ENCODE measurements at regions of chr10 and their contacts with region 1.

Region 1: GRCh38 chr10:70106958-70107791 is 25.4 kb downstream of the AIFM2 start:
- DNase-seq: peak in 2 of 3 donors; percentile 10 to 17
- H3K4me3 ChIP-seq: no peak overlapping the region
- H3K27ac ChIP-seq: no peak overlapping the region
- H3K4me1 ChIP-seq: no peaks in the 10 kb centered on the region
- H3K27me3 ChIP-seq: no peaks in the 10 kb centered on the region

Region 2: DNA sequence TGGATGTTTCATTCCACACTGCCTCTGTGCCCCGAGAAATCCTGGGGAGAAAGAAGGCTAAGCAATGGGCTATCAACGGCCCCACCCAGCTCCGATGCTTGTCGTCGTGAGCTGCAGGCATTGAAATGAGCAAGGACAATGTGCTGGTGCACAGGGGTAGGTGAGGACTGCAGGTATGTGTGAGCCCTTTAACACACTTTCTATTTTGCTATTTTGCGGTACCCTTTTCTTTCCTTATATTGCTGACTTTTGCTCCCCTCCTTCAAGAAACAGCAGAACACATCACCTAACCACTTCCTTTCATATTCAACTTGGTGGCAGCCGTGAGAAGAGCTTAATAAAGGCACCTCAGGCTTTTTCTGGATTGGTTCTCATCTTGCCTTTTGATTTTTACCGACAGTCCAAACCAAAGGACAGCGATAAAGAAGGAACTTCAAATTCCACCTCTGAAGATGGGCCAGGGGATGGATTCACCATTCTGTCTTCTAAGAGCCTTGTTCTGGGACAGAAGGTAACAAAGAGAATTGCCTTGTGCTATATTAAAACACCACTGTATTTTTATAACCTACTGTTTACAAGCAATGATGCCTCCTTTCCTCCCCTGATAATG is 13.7 kb before region 1 on chr10:
- CTCF ChIA-PET with region 1: interaction called, 15 read pairs
- POLR2A ChIA-PET with region 1: no interaction called
- DNase-seq: peak in 2 of 3 donors; percentile 18 to 26
- H3K4me3 ChIP-seq: no peak overlapping the region
- H3K27ac ChIP-seq: no peak overlapping the region
- H3K4me1 ChIP-seq: peaks cover 0 to 8% (median 1%) of the 10 kb centered on the region in 4 experiments
- H3K27me3 ChIP-seq: no peaks in the 10 kb centered on the region